ENCODE measurements at regions of chr17 and their contacts with region 1.

Region 1: DNA sequence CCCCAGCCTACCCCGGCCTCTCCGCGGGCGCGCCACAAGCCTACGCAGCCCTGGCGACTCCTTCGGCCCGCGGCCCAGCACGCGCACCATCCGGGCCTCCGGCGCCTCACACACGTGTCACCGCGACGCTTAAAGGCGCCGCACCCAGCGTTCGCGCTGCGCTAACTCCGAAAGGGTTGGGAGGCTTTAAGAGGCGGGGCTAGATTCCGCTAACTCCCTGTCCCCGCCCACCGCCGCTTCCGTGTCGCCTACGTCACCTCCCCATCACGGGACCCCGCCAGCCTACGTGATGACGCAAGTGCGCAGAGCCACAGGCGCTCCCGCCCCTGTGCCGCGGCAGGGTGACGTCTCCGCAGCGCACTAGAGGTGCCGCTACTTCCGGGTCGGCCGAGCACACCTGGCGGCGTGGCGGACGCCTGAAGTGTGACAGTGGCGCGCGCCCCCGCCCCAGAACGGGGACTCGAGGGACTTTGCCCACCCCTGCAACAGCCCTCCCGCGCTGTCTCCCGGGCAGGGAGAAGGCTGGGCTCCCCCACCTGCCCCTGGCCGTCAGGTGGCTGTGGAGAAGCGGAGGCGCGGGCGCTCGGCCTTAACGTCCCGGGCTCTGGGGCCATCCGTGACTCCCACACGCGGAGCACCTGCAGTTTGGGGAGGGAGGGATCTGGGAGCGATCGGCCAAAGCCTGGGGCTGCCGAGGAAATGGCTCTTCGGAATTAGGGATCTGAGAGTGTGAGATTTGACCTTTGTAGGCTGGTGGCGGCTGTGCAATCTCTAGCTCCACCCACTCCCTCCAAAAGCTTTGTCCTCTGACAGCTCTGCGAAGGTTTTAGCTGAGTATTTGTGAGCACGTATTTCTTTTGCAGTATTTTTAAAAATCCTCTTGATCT is at the start of gene USP36:
- DNase-seq: peak; percentile 100
- ATAC-seq: peak; percentile 82 to 94 (median 85)
- H3K4me3 ChIP-seq: peak within 1 kb of the TSS; percentile 62
- H3K4me3 Mint-ChIP-seq: peak within 1 kb of the TSS; percentile 89
- H3K27ac ChIP-seq: peak within 1 kb of the TSS; percentile 96
- H3K27ac Mint-ChIP-seq: peak within 1 kb of the TSS; percentile 92 to 96
- H3K4me1 ChIP-seq: peaks cover 25% of the 10 kb centered on the region
- H3K4me1 Mint-ChIP-seq: peaks cover 23 to 44% of the 10 kb centered on the region in 2 donors
- H3K27me3 ChIP-seq: no peaks in the 10 kb centered on the region
- H3K27me3 Mint-ChIP-seq: no peaks in the 10 kb centered on the region
- CTCF ChIP-seq: no peak
- total RNA-seq, gene USP36: 241 to 304 (median 270) TPM

Region 2: GRCh38 chr17:78789663-78790181 is 51.2 kb before region 1 on chr17:
- intact Hi-C with region 1: loop called (anchors 5 kb)
- DNase-seq: peak in 1 of 2 donors; percentile 84
- ATAC-seq: peak; percentile 50 to 71 (median 62)
- H3K4me3 ChIP-seq: no peak overlapping the region
- H3K4me3 Mint-ChIP-seq: peak overlapping the region; percentile 47
- H3K27ac ChIP-seq: peak overlapping the region; percentile 71
- H3K27ac Mint-ChIP-seq: peak overlapping the region; percentile 83 to 86
- H3K4me1 ChIP-seq: peaks cover 87% of the 10 kb centered on the region
- H3K4me1 Mint-ChIP-seq: peaks cover 67 to 75% of the 10 kb centered on the region in 2 donors
- H3K27me3 ChIP-seq: no peaks in the 10 kb centered on the region
- H3K27me3 Mint-ChIP-seq: no peaks in the 10 kb centered on the region
- CTCF ChIP-seq: no peak

Region 3: DNA sequence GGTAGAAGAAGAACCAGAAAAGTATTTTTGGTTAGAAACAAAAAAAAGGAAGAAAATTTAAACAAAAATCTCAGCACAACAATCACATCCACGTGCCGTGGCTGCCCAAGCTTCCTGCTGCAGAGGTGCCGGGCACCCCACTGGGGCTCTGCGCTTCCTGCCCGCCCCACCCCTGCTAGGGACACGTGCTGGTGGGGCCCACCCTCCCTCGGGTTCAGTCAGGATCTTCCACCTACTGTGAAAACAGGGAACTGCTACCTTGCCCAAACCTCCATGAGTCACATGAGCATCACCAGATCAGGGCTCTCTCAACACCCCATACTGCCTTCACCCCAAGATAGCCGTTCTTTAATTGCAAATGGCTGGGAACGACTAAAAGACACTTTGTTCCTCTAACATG is 34.5 kb before region 1 on chr17:
- intact Hi-C with region 1: no loop called
- DNase-seq: peak in 1 of 2 donors; percentile 59
- ATAC-seq: peak; percentile 39 to 66 (median 45)
- H3K4me3 ChIP-seq: no peak overlapping the region
- H3K4me3 Mint-ChIP-seq: no peak overlapping the region
- H3K27ac ChIP-seq: peak overlapping the region; percentile 34
- H3K27ac Mint-ChIP-seq: peak overlapping the region; percentile 12 to 58
- H3K4me1 ChIP-seq: peaks cover 21% of the 10 kb centered on the region
- H3K4me1 Mint-ChIP-seq: peaks cover 14 to 20% of the 10 kb centered on the region in 2 donors
- H3K27me3 ChIP-seq: no peaks in the 10 kb centered on the region
- H3K27me3 Mint-ChIP-seq: no peaks in the 10 kb centered on the region
- CTCF ChIP-seq: no peak

Region 4: DNA sequence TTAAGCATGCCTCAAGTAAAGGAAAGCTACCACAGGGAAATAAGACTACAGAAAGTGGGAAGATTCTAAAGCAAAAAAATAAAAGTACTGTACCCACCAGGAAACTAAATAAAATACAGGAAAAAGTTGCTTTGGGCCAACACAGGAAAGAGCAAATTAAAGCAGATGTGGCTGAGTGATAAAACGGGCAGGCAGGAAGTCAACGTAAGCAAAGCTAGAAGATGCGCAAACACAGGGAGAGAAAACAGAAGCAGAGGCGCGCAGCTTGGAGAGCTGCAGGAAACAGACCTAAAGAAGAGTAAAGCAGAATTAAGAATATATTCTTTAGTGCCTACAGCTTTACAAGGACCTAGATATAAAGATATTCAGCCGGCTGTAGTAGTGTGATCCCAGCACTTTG is 22.0 kb before region 1 on chr17:
- intact Hi-C with region 1: loop called (anchors 1 kb)
- DNase-seq: peak in 1 of 2 donors; percentile 89
- ATAC-seq: peak; percentile 45 to 68 (median 50)
- H3K4me3 ChIP-seq: no peak overlapping the region
- H3K4me3 Mint-ChIP-seq: peak overlapping the region; percentile 56
- H3K27ac ChIP-seq: peak overlapping the region; percentile 69
- H3K27ac Mint-ChIP-seq: peak overlapping the region; percentile 79 to 87
- H3K4me1 ChIP-seq: peaks cover 40% of the 10 kb centered on the region
- H3K4me1 Mint-ChIP-seq: peaks cover 30 to 36% of the 10 kb centered on the region in 2 donors
- H3K27me3 ChIP-seq: no peaks in the 10 kb centered on the region
- H3K27me3 Mint-ChIP-seq: no peaks in the 10 kb centered on the region
- CTCF ChIP-seq: no peak

Region 5: GRCh38 chr17:79294459-79295071 is 453.6 kb after region 1 on chr17:
- intact Hi-C with region 1: no loop called
- DNase-seq: peak; percentile 59 to 63
- ATAC-seq: peak in 2 of 3 donors; percentile 50 to 60
- H3K4me3 ChIP-seq: no peak overlapping the region
- H3K4me3 Mint-ChIP-seq: no peak overlapping the region
- H3K27ac ChIP-seq: no peak overlapping the region
- H3K27ac Mint-ChIP-seq: no peak overlapping the region
- H3K4me1 ChIP-seq: no peaks in the 10 kb centered on the region
- H3K4me1 Mint-ChIP-seq: no peaks in the 10 kb centered on the region
- H3K27me3 ChIP-seq: no peaks in the 10 kb centered on the region
- H3K27me3 Mint-ChIP-seq: peaks cover 0 to 14% of the 10 kb centered on the region in 2 donors
- CTCF ChIP-seq: no peak